ENCODE measurements at regions of chr12 and their contacts with region 1.

Region 1: DNA sequence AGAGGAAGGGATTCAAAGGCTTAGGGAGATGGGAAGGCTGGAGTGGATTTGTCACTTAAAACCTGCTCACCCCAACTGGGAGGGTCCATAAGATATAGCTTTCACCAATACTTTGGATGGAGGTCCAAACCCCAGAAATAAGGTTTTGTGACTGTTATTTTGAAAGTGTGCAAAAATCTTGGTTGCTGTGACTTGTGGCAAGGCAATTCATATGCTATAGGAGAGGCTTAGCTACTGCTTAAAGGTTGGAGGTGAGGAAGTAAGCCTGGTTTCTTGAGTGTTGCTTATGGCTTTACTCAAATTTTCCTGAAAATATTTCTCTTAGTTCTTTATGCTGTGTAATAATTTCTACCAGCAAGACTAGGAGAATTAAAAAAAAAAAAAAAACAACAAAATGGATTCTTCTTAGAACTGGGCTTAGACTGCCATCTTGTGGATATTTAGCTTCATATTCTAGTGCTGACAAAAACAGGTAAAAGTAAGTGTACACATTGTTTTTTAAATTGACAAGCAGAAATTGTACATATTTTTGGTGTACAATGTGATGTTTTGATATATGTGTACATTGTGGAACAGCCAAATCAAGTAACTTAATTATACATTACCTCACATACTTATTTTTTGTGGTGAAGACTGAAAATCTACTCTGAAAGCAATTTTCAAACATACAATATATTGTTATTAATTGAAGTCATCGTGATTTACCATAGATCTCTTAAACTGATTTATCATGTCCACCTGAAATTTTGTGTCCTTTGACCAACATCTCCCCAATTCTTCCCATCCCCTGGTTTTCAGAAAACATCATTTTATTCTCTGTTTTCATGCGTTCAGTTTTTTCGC is 23.0 kb downstream of the PDE6H start:
- DNase-seq: no peak
- H3K4me3 Mint-ChIP-seq: no peak overlapping the region
- H3K27ac Mint-ChIP-seq: no peak overlapping the region
- H3K4me1 Mint-ChIP-seq: peaks cover 24% of the 10 kb centered on the region
- H3K27me3 Mint-ChIP-seq: peaks cover 23% of the 10 kb centered on the region

Region 2: GRCh38 chr12:14723763-14724162 is 272.0 kb before region 1 on chr12:
- CTCF ChIA-PET with region 1: interaction called, 16 read pairs
- POLR2A ChIA-PET with region 1: no interaction called
- DNase-seq: peak; percentile 63
- H3K4me3 Mint-ChIP-seq: no peak overlapping the region
- H3K27ac Mint-ChIP-seq: no peak overlapping the region
- H3K4me1 Mint-ChIP-seq: no peaks in the 10 kb centered on the region
- H3K27me3 Mint-ChIP-seq: peaks cover 16% of the 10 kb centered on the region

Region 3: GRCh38 chr12:14774906-14775762 is 220.7 kb before region 1 on chr12:
- CTCF ChIA-PET with region 1: interaction called, 27 read pairs
- POLR2A ChIA-PET with region 1: interaction called, 5 read pairs
- DNase-seq: peak; percentile 41
- H3K4me3 Mint-ChIP-seq: peak overlapping the region; percentile 96
- H3K27ac Mint-ChIP-seq: peak overlapping the region; percentile 95
- H3K4me1 Mint-ChIP-seq: peaks cover 41% of the 10 kb centered on the region
- H3K27me3 Mint-ChIP-seq: peaks cover 3% of the 10 kb centered on the region

Region 4: DNA sequence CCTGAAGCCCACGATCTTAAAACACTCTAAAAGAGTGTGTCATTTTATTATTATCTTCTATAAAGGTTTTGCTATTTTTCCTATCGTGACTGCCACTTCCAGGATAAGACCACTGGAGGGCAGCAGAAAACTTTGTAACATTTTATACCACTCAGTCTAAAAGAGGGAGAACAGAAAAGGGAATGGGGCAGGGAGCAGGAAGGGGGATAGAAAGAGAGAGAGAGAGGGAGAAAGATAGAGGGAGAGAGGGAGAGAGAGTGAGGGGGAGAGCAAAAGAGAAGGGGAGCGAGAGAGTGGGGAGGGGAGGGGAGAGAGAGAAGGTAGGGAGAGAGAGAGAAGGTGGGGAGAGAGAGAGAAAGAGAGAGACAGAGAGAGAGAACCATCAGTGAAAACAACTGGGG is 150.5 kb before region 1 on chr12:
- CTCF ChIA-PET with region 1: interaction called, 41 read pairs
- POLR2A ChIA-PET with region 1: interaction called, 4 read pairs
- DNase-seq: peak; percentile 39
- H3K4me3 Mint-ChIP-seq: no peak overlapping the region
- H3K27ac Mint-ChIP-seq: no peak overlapping the region
- H3K4me1 Mint-ChIP-seq: peaks cover 2% of the 10 kb centered on the region
- H3K27me3 Mint-ChIP-seq: peaks cover 3% of the 10 kb centered on the region

Region 5: GRCh38 chr12:14937689-14938088 is 58.1 kb before region 1 on chr12:
- CTCF ChIA-PET with region 1: interaction called, 18 read pairs
- POLR2A ChIA-PET with region 1: interaction called, 5 read pairs
- DNase-seq: no peak
- H3K4me3 Mint-ChIP-seq: no peak overlapping the region
- H3K27ac Mint-ChIP-seq: peak overlapping the region; percentile 21
- H3K4me1 Mint-ChIP-seq: peaks cover 20% of the 10 kb centered on the region
- H3K27me3 Mint-ChIP-seq: no peaks in the 10 kb centered on the region